Left ventricle myocardium superior (tissue), 1 donor: ENCODE measurements at regions of chr14 and their contacts with region 1.

Region 1: GRCh38 chr14:64823305-64823861 is 56.3 kb downstream of the SPTB start:
- DNase-seq: peak; percentile 88
- ATAC-seq: peak; percentile 86

Region 2: DNA sequence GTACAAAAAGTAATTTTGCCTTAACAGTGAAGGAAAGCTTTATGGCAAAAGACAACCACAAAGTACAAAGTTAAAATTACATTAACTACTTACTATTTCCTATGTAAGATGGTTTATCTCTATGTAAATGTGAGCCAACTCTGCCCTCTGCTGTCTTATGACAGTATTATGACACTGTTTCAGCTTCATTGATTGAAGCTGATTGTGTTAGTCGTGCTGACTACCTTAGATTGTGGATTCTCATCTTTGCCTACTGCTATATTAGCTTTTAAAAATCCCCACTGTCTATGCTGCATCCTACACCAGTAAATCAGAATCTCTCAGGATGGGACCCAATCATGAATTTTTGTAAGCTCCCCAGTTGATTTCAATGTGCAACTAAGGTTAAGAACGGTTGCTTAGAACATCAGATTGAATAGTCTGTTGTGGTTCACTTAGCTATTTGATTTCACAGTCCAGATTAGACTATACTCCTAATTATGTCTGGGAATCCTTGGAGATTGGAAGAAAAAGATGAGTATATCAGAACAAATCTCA is 68.5 kb after region 1 on chr14:
- intact Hi-C with region 1: loop called (anchors 5 kb)
- DNase-seq: no peak
- ATAC-seq: peak; percentile 82